Activated CD4-positive, alpha-beta T cell treated with anti-CD3 and anti-CD28 coated beads for 36 hours (primary cell): ENCODE measurements at regions of chr6 and their contacts with region 1.

Region 1: GRCh38 chr6:90413867-90414266 is 117.2 kb upstream of the BACH2 start:
- DNase-seq: peak; percentile 91
- ATAC-seq: peak; percentile 51
- H3K4me3 Mint-ChIP-seq: peak overlapping the region; percentile 67
- H3K27ac Mint-ChIP-seq: peak overlapping the region; percentile 93
- H3K4me1 Mint-ChIP-seq: peaks cover 72% of the 10 kb centered on the region
- H3K27me3 Mint-ChIP-seq: no peaks in the 10 kb centered on the region

Region 2: DNA sequence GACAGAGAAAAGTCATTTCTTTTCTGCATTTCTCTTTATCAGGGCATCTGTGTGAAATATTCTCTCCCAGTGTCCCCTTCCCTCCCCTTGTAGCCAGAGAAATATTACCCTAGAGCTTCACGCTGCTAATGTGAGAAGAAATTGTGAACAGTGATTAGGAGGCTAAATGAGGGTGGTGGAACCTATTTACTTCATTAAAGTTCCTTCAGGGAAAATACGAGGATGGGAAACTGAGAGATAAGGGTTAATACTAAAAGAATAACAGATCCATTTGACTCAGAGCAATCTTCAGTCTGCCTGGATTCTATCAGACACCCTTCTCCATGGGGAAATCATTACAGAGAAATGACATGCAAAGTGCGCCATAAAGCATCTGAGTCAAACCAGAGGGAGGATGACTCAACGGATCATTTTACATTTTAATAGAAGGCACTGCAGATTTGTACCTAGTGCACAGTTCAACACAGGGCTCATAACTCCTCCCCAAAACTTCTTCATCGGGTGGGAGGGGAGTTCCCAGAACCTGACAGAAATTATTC is 388.3 kb before region 1 on chr6:
- CTCF ChIA-PET with region 1: no interaction called
- POLR2A ChIA-PET with region 1: no interaction called
- intact Hi-C with region 1: loop called in 1 of 2 experiments (anchors 5 kb)
- DNase-seq: peak; percentile 77
- ATAC-seq: peak; percentile 93
- H3K4me3 Mint-ChIP-seq: peak overlapping the region; percentile 22
- H3K27ac Mint-ChIP-seq: peak overlapping the region; percentile 90
- H3K4me1 Mint-ChIP-seq: peaks cover 88% of the 10 kb centered on the region
- H3K27me3 Mint-ChIP-seq: no peaks in the 10 kb centered on the region

Region 3: GRCh38 chr6:90403489-90404381 is 10.1 kb before region 1 on chr6:
- CTCF ChIA-PET with region 1: interaction called, 13 read pairs
- POLR2A ChIA-PET with region 1: interaction called, 16 read pairs
- intact Hi-C with region 1: loop called (anchors 1 kb)
- DNase-seq: no peak
- ATAC-seq: no peak
- H3K4me3 Mint-ChIP-seq: peak overlapping the region; percentile 20
- H3K27ac Mint-ChIP-seq: peak overlapping the region; percentile 69
- H3K4me1 Mint-ChIP-seq: peaks cover 81% of the 10 kb centered on the region
- H3K27me3 Mint-ChIP-seq: no peaks in the 10 kb centered on the region

Region 4: GRCh38 chr6:90425161-90425641 is 11.3 kb after region 1 on chr6:
- CTCF ChIA-PET with region 1: interaction called, 46 read pairs
- POLR2A ChIA-PET with region 1: interaction called, 14 read pairs
- intact Hi-C with region 1: loop called (anchors 1 kb)
- DNase-seq: peak; percentile 34
- ATAC-seq: peak; percentile 93
- H3K4me3 Mint-ChIP-seq: peak overlapping the region; percentile 49
- H3K27ac Mint-ChIP-seq: peak overlapping the region; percentile 94
- H3K4me1 Mint-ChIP-seq: peaks cover 34% of the 10 kb centered on the region
- H3K27me3 Mint-ChIP-seq: no peaks in the 10 kb centered on the region

Region 5: DNA sequence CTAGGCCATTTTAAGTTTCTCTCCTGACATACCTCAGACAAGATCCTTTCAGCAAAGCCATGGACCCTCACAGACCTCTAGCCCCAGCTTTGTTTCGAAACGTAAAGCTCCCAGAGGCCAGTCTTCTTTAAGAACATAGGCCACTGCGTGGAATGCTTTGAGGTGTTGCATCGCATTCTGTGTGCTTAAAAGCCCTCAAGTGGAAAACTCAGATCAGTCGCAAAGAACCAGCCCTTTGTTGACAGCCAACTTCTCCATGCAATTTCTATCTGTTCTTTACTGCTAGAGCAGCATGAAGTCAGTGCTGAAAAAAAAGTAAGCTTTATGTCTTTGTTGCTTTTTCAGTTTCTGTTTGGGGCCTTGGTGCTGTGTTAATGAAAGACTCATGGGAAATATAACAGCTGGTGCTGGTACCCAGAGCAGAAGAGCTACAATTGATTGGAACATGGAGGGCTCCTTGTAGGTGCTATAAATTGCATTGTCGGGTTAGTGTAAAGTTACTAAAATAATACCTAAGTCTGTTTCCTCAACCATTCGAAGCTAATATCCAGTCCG is 30.4 kb after region 1 on chr6:
- CTCF ChIA-PET with region 1: interaction called, 5 read pairs
- POLR2A ChIA-PET with region 1: no interaction called
- intact Hi-C with region 1: loop called in 1 of 2 experiments (anchors 1 kb)
- DNase-seq: no peak
- ATAC-seq: peak; percentile 42
- H3K4me3 Mint-ChIP-seq: peak overlapping the region; percentile 20
- H3K27ac Mint-ChIP-seq: peak overlapping the region; percentile 99
- H3K4me1 Mint-ChIP-seq: peaks cover 58% of the 10 kb centered on the region
- H3K27me3 Mint-ChIP-seq: no peaks in the 10 kb centered on the region

Region 6: GRCh38 chr6:90466154-90466940 is 52.5 kb after region 1 on chr6:
- CTCF ChIA-PET with region 1: interaction called, 4 read pairs
- POLR2A ChIA-PET with region 1: interaction called, 6 read pairs
- intact Hi-C with region 1: loop called (anchors 1 kb)
- DNase-seq: peak; percentile 68
- ATAC-seq: peak; percentile 74
- H3K4me3 Mint-ChIP-seq: peak overlapping the region; percentile 48
- H3K27ac Mint-ChIP-seq: peak overlapping the region; percentile 93
- H3K4me1 Mint-ChIP-seq: peaks cover 97% of the 10 kb centered on the region
- H3K27me3 Mint-ChIP-seq: peaks cover 2% of the 10 kb centered on the region

Region 7: DNA sequence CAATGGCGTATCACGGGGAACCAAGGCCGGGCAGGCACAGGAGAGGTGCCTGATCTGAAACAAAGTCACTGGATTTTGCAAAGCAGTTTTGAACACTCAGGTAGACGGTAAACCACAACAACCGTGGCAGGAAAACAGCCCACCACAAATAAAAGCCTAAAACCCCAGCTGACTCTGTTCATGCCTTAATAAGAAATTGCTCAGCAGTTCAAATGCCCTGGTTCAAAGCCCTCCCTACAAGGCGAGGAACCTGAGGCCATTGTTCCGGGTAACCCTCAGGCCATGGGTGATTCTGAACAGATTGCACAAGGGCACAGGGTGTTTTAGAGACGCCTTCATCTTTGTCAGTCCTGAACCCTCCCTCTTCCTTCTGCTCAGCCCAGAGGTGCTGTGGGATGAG is 58.9 kb after region 1 on chr6:
- CTCF ChIA-PET with region 1: interaction called, 11 read pairs
- POLR2A ChIA-PET with region 1: interaction called, 7 read pairs
- intact Hi-C with region 1: loop called in 1 of 2 experiments (anchors 1 kb)
- DNase-seq: peak; percentile 51
- ATAC-seq: peak; percentile 9
- H3K4me3 Mint-ChIP-seq: peak overlapping the region; percentile 58
- H3K27ac Mint-ChIP-seq: peak overlapping the region; percentile 77
- H3K4me1 Mint-ChIP-seq: peaks cover 99% of the 10 kb centered on the region
- H3K27me3 Mint-ChIP-seq: peaks cover 2% of the 10 kb centered on the region